ENCODE measurements at regions of chr6 and their contacts with region 1.

Region 1: DNA sequence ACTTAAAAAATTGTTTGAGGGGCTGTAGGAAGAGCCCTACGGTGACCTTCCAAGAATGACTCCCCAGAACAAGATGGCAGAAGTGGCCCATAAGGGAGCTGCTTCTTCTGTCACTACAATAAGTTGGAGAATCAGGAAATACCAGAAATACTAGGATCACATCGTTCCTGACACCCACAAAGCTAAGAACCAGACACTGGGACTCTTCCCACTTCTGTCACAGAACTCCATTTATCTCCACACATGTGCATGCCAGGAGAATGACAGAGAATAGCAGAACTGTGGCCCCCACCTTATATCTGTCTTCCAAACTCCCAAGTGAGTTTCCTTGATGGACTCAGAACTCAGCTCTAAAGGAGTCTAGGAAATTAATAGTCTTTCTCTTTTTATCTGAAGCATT is 54.6 kb upstream of the UBR2 start:
- DNase-seq: no peak
- ATAC-seq: no peak
- H3K4me3 ChIP-seq: no peak overlapping the region
- H3K27ac ChIP-seq: no peak overlapping the region
- H3K4me1 ChIP-seq: peaks cover 4% of the 10 kb centered on the region
- H3K27me3 ChIP-seq: no peaks in the 10 kb centered on the region
- CTCF ChIP-seq: no peak
- POLR2A ChIP-seq: no peak
- RAD21 ChIP-seq: no peak

Region 2: DNA sequence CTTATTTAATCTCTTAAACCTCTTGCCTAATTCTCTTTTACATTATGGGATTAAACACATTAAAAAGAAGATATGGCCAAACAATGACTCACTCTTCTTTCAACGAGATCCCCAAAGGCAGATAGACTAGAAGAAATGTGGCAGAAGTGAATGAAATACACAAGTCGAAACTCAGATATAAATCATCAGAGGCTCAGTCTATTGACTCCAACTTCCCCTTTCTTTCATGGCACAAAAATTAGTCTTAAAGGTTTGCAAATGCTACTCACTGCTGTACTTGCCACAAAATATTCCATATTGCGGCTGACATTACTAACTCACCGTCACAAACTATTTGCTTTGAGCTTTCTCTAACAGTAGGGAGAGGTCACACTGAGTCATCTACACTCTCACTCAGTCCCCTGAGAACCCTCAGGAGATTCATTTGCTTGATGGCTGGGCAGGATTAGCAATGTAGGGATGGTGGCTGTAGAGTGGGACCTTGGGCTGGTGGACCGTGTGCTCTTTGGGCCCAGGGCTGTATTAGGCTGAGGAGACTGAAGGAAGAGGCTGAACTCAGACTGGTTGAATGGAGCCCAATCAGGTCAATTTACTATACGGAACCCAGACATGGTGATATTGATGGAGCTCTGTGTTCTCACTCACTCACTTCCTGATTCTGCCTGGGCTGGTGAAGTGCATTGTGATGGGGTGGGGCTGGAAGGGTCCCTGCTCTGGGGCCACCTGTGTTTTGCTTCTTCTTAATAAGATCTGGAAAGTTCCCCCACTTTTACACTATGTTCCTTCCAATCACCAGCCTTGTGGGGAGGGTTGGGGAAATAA is 11.7 kb after region 1 on chr6:
- CTCF ChIA-PET with region 1: interaction called, 7 read pairs
- POLR2A ChIA-PET with region 1: interaction called, 11 read pairs
- dilution Hi-C with region 1: no loop called
- in situ Hi-C with region 1: no loop called
- intact Hi-C with region 1: no loop called
- DNase-seq: peak; percentile 80
- ATAC-seq: peak; percentile 60
- H3K4me3 ChIP-seq: no peak overlapping the region
- H3K27ac ChIP-seq: no peak overlapping the region
- H3K4me1 ChIP-seq: peaks cover 4% of the 10 kb centered on the region; the same call in 1 of the 2 replicates
- H3K27me3 ChIP-seq: no peaks in the 10 kb centered on the region
- CTCF ChIP-seq: no peak
- POLR2A ChIP-seq: no peak
- RAD21 ChIP-seq: no peak